Breast epithelium (tissue), 4 donors: ENCODE measurements at regions of chr9 and their contacts with region 1.

Region 1: DNA sequence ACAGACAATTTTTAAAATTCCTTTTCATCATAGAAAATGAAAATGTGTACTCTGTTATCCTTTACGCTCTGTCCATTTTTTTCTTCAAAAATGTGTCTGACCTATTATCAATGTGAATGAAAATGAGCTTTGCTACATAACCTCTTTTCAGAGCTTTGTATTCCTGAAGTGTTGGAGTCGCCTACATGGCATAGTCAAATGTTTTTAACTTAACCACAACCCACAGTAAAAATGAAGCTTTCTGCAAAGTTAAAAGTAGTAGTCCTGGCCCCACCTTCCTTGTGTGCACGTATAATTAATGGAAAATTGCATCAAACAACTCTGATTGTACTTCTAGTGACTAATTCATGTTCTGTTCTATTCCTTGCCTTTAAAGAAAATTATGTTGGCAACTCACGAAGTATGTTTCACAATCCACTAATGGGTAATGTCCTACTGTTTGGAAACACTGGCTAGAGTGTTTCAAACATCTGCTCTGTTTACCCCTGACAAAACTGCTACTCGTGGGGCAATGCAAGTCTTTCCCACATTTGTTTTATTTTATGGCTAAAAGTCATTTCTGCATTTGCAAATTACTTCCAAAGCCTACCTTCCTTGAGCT is 18.6 kb upstream of the PSAT1 start:
- DNase-seq: no peak
- H3K4me3 ChIP-seq: no peak overlapping the region
- H3K27ac ChIP-seq: no peak overlapping the region
- H3K4me1 ChIP-seq: peaks cover 0 to 5% of the 10 kb centered on the region in 2 donors
- H3K27me3 ChIP-seq: no peaks in the 10 kb centered on the region
- CTCF ChIP-seq: no peak
- POLR2A ChIP-seq: no peak

Region 2: GRCh38 chr9:77291714-77292113 is 986.6 kb before region 1 on chr9:
- intact Hi-C with region 1: loop called (anchors 5 kb)
- DNase-seq: no peak
- H3K4me3 ChIP-seq: no peak overlapping the region
- H3K27ac ChIP-seq: no peak overlapping the region
- H3K4me1 ChIP-seq: no peaks in the 10 kb centered on the region
- H3K27me3 ChIP-seq: no peaks in the 10 kb centered on the region
- CTCF ChIP-seq: no peak
- POLR2A ChIP-seq: no peak